GM12878 (cell line): ENCODE measurements at regions of chr3 and their contacts with region 1.

Region 1: DNA sequence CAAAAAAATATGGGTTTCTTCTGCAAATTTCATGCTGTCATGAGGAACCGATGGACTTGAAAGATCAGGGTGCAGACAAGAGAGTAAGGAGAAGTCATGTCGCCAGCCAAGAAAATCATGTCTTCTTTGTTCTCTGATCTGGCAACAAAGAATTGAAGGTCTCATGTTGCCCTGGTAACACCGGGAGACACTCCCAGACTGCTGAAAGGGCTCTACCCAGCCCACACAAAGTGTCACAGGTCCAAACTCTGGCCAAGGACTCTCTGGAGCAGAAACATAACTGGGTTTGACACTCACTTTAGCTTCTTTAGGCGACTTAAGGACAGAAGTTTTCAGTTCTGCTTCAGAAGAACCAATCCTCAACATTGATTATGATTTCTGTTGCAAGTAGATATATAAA is 42.9 kb downstream of the SIDT1 start:
- DNase-seq: no peak
- ATAC-seq: no peak
- H3K4me3 ChIP-seq: no peak overlapping the region
- H3K27ac ChIP-seq: no peak overlapping the region
- H3K4me1 ChIP-seq: no peaks in the 10 kb centered on the region
- H3K27me3 ChIP-seq: no peaks in the 10 kb centered on the region
- CTCF ChIP-seq: no peak
- EP300 ChIP-seq: no peak
- POLR2A ChIP-seq: no peak
- RAD21 ChIP-seq: no peak

Region 2: GRCh38 chr3:113051302-113051711 is 523.9 kb before region 1 on chr3:
- CTCF ChIA-PET with region 1: no interaction called
- POLR2A ChIA-PET with region 1: no interaction called
- RAD21 ChIA-PET with region 1: no interaction called
- SMC1A ChIA-PET with region 1: no interaction called
- in situ Hi-C with region 1: no loop called
- intact Hi-C with region 1: loop called (anchors 1 kb)
- DNase-seq: peak; percentile 63
- ATAC-seq: peak; percentile 99
- H3K4me3 ChIP-seq: no peak overlapping the region
- H3K27ac ChIP-seq: no peak overlapping the region
- H3K4me1 ChIP-seq: peaks cover 3% of the 10 kb centered on the region
- H3K27me3 ChIP-seq: no peaks in the 10 kb centered on the region
- CTCF ChIP-seq: peak; percentile 85 to 93 (median 93); a peak in 5 of 6 replicates
- EP300 ChIP-seq: peak; percentile 33 to 45; a peak in 1 of 4 replicates
- POLR2A ChIP-seq: no peak
- RAD21 ChIP-seq: peak; percentile 93

Region 3: DNA sequence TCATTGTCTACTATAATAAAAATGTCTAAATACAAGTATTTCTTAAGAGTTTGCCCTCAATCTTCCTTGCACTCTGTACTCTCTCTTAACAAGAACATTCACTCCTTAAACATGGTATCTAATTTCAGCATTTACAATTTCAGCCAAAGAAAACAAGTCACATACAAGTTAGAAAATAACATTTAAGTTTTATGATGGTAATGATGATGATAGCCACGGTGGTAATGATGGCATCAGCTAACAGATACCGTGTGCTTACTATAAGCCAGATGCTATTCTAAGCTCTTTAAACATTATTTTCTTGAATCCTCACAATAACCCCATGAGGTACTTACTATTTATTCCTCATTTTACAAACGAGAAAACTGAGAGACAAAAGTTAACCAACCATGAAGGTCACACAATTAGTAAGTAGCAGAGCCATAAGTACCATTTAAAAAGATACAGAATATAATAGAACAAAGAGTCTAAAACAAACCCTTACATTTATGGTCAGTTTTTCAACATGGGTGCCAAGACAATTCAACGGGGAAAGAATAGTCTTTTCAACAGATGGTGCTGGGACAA is 67.6 kb before region 1 on chr3:
- CTCF ChIA-PET with region 1: interaction called, 49 read pairs
- POLR2A ChIA-PET with region 1: no interaction called
- RAD21 ChIA-PET with region 1: interaction called, 4 read pairs
- SMC1A ChIA-PET with region 1: interaction called, 39 read pairs
- in situ Hi-C with region 1: no loop called
- intact Hi-C with region 1: no loop called
- DNase-seq: no peak
- ATAC-seq: peak; percentile 23; the same call in 2 of the 3 replicates
- H3K4me3 ChIP-seq: no peak overlapping the region
- H3K27ac ChIP-seq: no peak overlapping the region
- H3K4me1 ChIP-seq: no peaks in the 10 kb centered on the region
- H3K27me3 ChIP-seq: no peaks in the 10 kb centered on the region
- CTCF ChIP-seq: no peak
- EP300 ChIP-seq: no peak
- POLR2A ChIP-seq: no peak
- RAD21 ChIP-seq: no peak

Region 4: DNA sequence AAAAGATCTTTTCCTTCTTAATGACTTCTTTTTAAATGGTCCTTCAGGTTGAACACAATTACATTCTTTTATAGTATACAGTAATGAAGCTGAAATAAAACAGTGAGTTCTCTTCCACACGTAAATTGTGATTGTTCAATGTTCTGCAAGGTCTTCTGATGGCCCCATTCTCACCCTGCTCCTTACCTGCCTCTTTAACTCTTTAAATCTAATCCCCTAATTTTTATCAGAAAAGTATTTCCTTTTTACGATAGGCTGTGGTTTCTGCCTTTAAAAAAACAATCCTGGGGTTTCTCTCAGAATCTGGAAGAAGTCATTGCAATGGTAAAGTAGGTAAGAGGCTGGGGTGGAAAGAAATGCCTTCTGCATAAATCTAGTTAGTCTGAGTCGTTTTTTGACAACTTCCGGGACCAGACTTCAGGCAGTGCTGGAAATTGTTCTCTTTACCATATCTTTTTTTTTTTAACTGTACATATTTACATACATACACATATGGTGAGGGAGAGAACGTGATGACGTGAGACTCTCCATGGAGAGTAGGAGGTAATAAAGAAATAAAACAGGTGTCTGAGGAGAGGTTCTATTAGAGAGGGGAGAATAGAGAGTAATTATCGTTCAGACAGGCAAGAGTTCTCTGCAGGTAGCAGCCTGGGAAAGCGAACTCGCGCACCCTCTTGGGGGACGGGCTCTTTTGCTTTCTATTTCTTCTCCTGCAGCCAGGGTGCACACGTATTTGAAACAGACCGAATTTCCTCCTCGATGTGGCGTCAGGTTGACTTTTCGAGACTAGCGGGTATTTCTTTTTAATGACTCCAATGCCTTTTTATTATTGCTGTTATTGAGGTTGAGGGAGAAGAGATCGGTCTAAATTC is 43.1 kb before region 1 on chr3 and contains the start of gene SIDT1:
- CTCF ChIA-PET with region 1: interaction called, 35 read pairs
- POLR2A ChIA-PET with region 1: no interaction called
- RAD21 ChIA-PET with region 1: interaction called, 24 read pairs
- SMC1A ChIA-PET with region 1: interaction called, 21 read pairs
- in situ Hi-C with region 1: no loop called
- intact Hi-C with region 1: loop called (anchors 1 kb)
- DNase-seq: peak; percentile 71
- ATAC-seq: peak; percentile 71
- H3K4me3 ChIP-seq: peak within 1 kb of the TSS; percentile 97
- H3K27ac ChIP-seq: peak within 1 kb of the TSS; percentile 98
- H3K4me1 ChIP-seq: peaks cover 6% of the 10 kb centered on the region
- H3K27me3 ChIP-seq: no peaks in the 10 kb centered on the region
- CTCF ChIP-seq: peak in 1 of 3 experiments; percentile 25; a peak in 2 of 6 replicates
- EP300 ChIP-seq: 0 out of 4 replicates have a peak, but pooled peaks of 1 of the 2 experiments have one; percentile 26
- POLR2A ChIP-seq: peak; percentile 74
- RAD21 ChIP-seq: no peak
- polyA plus RNA-seq, gene SIDT1: 3.0 to 3.2 TPM

Region 5: GRCh38 chr3:113552851-113553250 is 22.4 kb before region 1 on chr3:
- CTCF ChIA-PET with region 1: interaction called, 36 read pairs
- POLR2A ChIA-PET with region 1: no interaction called
- RAD21 ChIA-PET with region 1: interaction called, 15 read pairs
- SMC1A ChIA-PET with region 1: interaction called, 11 read pairs
- in situ Hi-C with region 1: no loop called
- intact Hi-C with region 1: no loop called
- DNase-seq: no peak
- ATAC-seq: peak; percentile 85
- H3K4me3 ChIP-seq: no peak overlapping the region
- H3K27ac ChIP-seq: no peak overlapping the region; the same call in 1 of the 2 replicates
- H3K4me1 ChIP-seq: peaks cover 4% of the 10 kb centered on the region
- H3K27me3 ChIP-seq: no peaks in the 10 kb centered on the region
- CTCF ChIP-seq: peak in 2 of 3 experiments; percentile 24 to 67; a peak in 3 of 6 replicates
- EP300 ChIP-seq: no peak
- POLR2A ChIP-seq: no peak
- RAD21 ChIP-seq: peak; percentile 80

Region 6: GRCh38 chr3:113590983-113591382 is 15.8 kb after region 1 on chr3:
- CTCF ChIA-PET with region 1: interaction called, 20 read pairs
- POLR2A ChIA-PET with region 1: no interaction called
- RAD21 ChIA-PET with region 1: interaction called, 7 read pairs
- SMC1A ChIA-PET with region 1: interaction called, 4 read pairs
- in situ Hi-C with region 1: no loop called
- intact Hi-C with region 1: no loop called
- DNase-seq: no peak
- ATAC-seq: no peak
- H3K4me3 ChIP-seq: no peak overlapping the region
- H3K27ac ChIP-seq: no peak overlapping the region
- H3K4me1 ChIP-seq: no peaks in the 10 kb centered on the region
- H3K27me3 ChIP-seq: no peaks in the 10 kb centered on the region
- CTCF ChIP-seq: no peak
- EP300 ChIP-seq: no peak
- POLR2A ChIP-seq: no peak
- RAD21 ChIP-seq: no peak

Region 7: GRCh38 chr3:113649174-113649845 is 74.1 kb after region 1 on chr3:
- CTCF ChIA-PET with region 1: no interaction called
- POLR2A ChIA-PET with region 1: no interaction called
- RAD21 ChIA-PET with region 1: no interaction called
- SMC1A ChIA-PET with region 1: no interaction called
- in situ Hi-C with region 1: no loop called
- intact Hi-C with region 1: no loop called
- DNase-seq: no peak
- ATAC-seq: no peak
- H3K4me3 ChIP-seq: no peak overlapping the region
- H3K27ac ChIP-seq: no peak overlapping the region
- H3K4me1 ChIP-seq: no peaks in the 10 kb centered on the region
- H3K27me3 ChIP-seq: no peaks in the 10 kb centered on the region
- CTCF ChIP-seq: no peak
- EP300 ChIP-seq: no peak
- POLR2A ChIP-seq: no peak
- RAD21 ChIP-seq: no peak

Region 8: DNA sequence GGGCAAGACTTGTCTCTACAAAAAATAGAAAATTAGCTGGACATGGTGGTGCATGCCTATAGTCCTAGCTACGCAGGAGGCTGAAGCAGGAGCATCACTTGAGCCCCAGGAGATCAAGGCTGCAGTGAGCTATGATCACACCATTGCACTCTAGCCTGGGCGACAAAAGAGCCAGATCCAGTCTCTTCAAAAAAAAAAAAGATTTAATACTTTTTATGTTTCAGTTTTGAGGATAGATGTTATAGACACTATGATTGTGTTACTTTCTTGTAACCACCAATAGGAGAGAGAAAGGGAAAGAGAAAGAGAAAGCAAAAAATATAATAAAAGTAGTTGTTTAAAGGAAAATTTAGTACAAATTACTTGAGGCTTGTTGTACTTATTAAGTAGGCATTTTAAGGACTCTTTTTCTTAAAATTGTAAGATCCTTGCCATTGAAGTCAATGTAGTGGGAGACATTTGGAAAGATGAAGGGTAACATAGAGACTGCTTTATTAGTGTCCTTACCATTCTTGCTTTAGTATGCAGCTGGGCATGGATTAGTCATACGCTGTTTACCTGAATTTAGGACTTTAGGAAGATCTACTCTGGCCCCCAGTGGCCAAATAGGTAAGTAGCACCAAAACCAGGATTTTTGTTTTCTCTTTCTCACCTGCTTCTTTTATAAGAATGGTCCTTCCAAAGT is 337.5 kb after region 1 on chr3:
- CTCF ChIA-PET with region 1: interaction called, 13 read pairs
- POLR2A ChIA-PET with region 1: no interaction called
- RAD21 ChIA-PET with region 1: interaction called, 5 read pairs
- SMC1A ChIA-PET with region 1: interaction called, 4 read pairs
- in situ Hi-C with region 1: no loop called
- intact Hi-C with region 1: no loop called
- DNase-seq: peak; percentile 35
- ATAC-seq: peak; percentile 98
- H3K4me3 ChIP-seq: no peak overlapping the region
- H3K27ac ChIP-seq: no peak overlapping the region
- H3K4me1 ChIP-seq: no peaks in the 10 kb centered on the region
- H3K27me3 ChIP-seq: no peaks in the 10 kb centered on the region
- CTCF ChIP-seq: peak; percentile 76 to 89 (median 79)
- EP300 ChIP-seq: no peak
- POLR2A ChIP-seq: no peak
- RAD21 ChIP-seq: peak; percentile 95